Naive thymus-derived CD4-positive, alpha-beta T cell (primary cell): ENCODE measurements at regions of chr7 and their contacts with region 1.

Region 1: GRCh38 chr7:141014524-141015395 is at the start of gene MRPS33:
- DNase-seq: peak; percentile 79 to 97 (median 96)
- ATAC-seq: peak; percentile 99
- H3K4me3 ChIP-seq: peak within 1 kb of the TSS; percentile 82
- H3K4me3 Mint-ChIP-seq: peak within 1 kb of the TSS; percentile 85 to 99 (median 98)
- H3K27ac ChIP-seq: peak within 1 kb of the TSS; percentile 95
- H3K27ac Mint-ChIP-seq: peak within 1 kb of the TSS; percentile 97 to 100 (median 100)
- H3K4me1 ChIP-seq: peaks cover 8 to 16% of the 10 kb centered on the region in 2 donors
- H3K4me1 Mint-ChIP-seq: peaks cover 10 to 49% (median 39%) of the 10 kb centered on the region in 7 donors
- H3K27me3 ChIP-seq: no peaks in the 10 kb centered on the region
- H3K27me3 Mint-ChIP-seq: peaks cover 5 to 29% (median 8%) of the 10 kb centered on the region in 5 donors
- total RNA-seq, gene MRPS33: 25.9 to 69.1 (median 48.4) TPM

Region 2: DNA sequence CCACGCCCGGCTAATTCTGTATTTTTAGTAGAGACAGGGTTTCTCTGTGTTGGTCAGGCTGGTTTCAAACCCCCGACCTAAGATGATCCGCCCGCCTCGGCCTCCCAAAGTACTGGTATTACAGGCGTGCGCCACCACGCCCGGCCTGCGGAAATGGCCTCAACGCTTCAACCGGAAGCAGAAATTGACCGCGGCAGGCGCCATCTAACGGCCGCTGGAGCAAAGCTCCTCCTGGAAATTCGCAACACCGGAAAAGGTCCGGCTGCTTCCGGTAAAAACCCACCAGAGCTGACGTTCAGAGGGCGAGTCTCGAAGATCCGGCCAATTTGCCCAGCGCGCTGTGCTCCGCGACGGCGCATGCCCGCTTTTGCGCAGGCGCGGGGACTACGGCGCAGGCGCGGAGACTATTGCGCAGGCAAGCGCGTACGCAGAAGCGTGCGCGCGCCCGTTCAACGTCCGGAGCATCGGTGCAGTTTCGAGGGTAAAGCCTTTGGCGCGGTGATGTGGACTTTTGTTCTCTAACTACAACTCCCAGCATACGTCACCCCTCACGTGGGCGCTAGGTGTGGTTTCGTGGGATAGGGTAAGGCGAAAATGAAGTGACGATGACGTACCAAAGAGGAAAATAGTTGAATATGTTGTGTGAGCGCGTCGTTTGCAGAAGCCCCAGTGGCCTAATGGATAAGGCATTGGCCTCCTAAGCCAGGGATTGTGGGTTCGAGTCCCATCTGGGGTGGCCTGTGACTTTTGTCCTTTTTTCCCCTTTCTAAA is 1674.5 kb before region 1 on chr7:
- CTCF ChIA-PET with region 1: no interaction called
- POLR2A ChIA-PET with region 1: no interaction called
- intact Hi-C with region 1: loop called in 1 of 2 experiments (anchors 1 kb)
- DNase-seq: peak; percentile 93 to 100 (median 99)
- ATAC-seq: peak; percentile 89
- H3K4me3 ChIP-seq: peak overlapping the region; percentile 95
- H3K4me3 Mint-ChIP-seq: peak overlapping the region; percentile 93 to 100 (median 98)
- H3K27ac ChIP-seq: peak overlapping the region; percentile 100
- H3K27ac Mint-ChIP-seq: peak overlapping the region; percentile 98 to 100 (median 100)
- H3K4me1 ChIP-seq: peaks cover 11 to 13% of the 10 kb centered on the region in 2 donors
- H3K4me1 Mint-ChIP-seq: peaks cover 12 to 49% (median 38%) of the 10 kb centered on the region in 7 donors
- H3K27me3 ChIP-seq: no peaks in the 10 kb centered on the region
- H3K27me3 Mint-ChIP-seq: peaks cover 0 to 9% (median 5%) of the 10 kb centered on the region in 5 donors

Region 3: DNA sequence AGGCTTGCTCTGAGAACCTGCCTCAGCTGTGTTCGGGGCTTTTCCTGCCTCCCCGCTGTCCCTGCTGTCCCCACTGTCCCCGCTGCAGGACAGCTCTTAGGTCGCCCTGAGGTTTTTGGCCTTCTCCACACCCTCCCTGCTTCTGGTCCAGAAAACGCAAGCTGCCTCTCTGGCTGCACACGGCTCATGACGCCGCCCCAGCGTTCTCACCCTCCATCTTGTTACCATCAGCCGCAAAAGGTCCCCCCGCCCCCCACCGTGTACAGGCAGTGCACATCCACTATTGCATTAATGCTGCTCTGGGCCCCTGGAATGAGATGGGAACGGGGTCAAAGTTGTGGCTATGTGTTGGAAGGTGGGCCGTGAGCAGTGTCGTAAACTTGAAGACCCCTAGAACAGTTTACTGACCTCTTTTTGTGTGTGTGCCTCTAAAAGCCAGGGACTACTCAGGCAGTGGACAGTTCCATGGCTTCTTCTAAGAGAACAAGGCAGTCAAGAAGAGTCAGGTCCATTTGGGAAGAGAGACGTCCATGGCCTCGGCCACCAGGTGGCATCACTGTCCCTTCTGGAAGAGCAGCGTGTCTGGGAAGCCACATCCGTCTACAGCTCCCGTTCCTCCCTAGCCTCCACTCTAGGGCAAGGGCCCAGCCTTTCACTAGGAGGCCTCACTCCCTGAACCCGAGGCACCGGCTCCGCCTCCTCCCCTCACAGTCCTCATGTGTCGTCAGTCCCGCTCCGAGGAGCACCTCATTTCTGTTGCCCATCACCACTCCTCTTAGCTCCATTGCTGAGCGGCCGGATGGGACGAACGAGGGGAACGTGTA is 497.0 kb before region 1 on chr7:
- CTCF ChIA-PET with region 1: no interaction called
- POLR2A ChIA-PET with region 1: interaction called, 5 read pairs
- intact Hi-C with region 1: loop called in 1 of 2 experiments (anchors 1 kb)
- DNase-seq: peak; percentile 36 to 69 (median 45)
- ATAC-seq: peak; percentile 74
- H3K4me3 ChIP-seq: no peak overlapping the region
- H3K4me3 Mint-ChIP-seq: peak overlapping the region in 4 of 10 donors; percentile 23 to 65 (median 41)
- H3K27ac ChIP-seq: no peak overlapping the region
- H3K27ac Mint-ChIP-seq: peak overlapping the region in 1 of 9 donors; percentile 65
- H3K4me1 ChIP-seq: no peaks in the 10 kb centered on the region
- H3K4me1 Mint-ChIP-seq: peaks cover 0 to 7% (median 3%) of the 10 kb centered on the region in 7 donors
- H3K27me3 ChIP-seq: peaks cover 0 to 2% of the 10 kb centered on the region in 2 donors
- H3K27me3 Mint-ChIP-seq: peaks cover 0 to 11% (median 6%) of the 10 kb centered on the region in 5 donors

Region 4: GRCh38 chr7:140696680-140697446 is 317.9 kb before region 1 on chr7 and contains the start of gene NDUFB2:
- CTCF ChIA-PET with region 1: interaction called, 4 read pairs
- POLR2A ChIA-PET with region 1: interaction called, 7 read pairs
- intact Hi-C with region 1: loop called (anchors 1 kb)
- DNase-seq: peak; percentile 72 to 92 (median 90)
- ATAC-seq: peak; percentile 92
- H3K4me3 ChIP-seq: peak within 1 kb of the TSS; percentile 99
- H3K4me3 Mint-ChIP-seq: peak within 1 kb of the TSS; percentile 87 to 100 (median 98)
- H3K27ac ChIP-seq: peak within 1 kb of the TSS; percentile 88
- H3K27ac Mint-ChIP-seq: peak within 1 kb of the TSS; percentile 92 to 99 (median 98)
- H3K4me1 ChIP-seq: peaks cover 12 to 16% of the 10 kb centered on the region in 2 donors
- H3K4me1 Mint-ChIP-seq: peaks cover 18 to 50% (median 40%) of the 10 kb centered on the region in 7 donors
- H3K27me3 ChIP-seq: no peaks in the 10 kb centered on the region
- H3K27me3 Mint-ChIP-seq: no peaks in the 10 kb centered on the region
- total RNA-seq, gene NDUFB2: 88.3 to 184 (median 94.0) TPM

Region 5: GRCh38 chr7:140924019-140924820 is 90.5 kb before region 1 on chr7:
- CTCF ChIA-PET with region 1: interaction called, 7 read pairs
- POLR2A ChIA-PET with region 1: interaction called, 15 read pairs
- intact Hi-C with region 1: loop called (anchors 1 kb)
- DNase-seq: peak; percentile 61 to 89 (median 70)
- ATAC-seq: peak; percentile 84
- H3K4me3 ChIP-seq: peak overlapping the region; percentile 85
- H3K4me3 Mint-ChIP-seq: peak overlapping the region in 1 of 10 donors; percentile 89
- H3K27ac ChIP-seq: peak overlapping the region; percentile 100
- H3K27ac Mint-ChIP-seq: peak overlapping the region in 3 of 9 donors; percentile 92 to 99 (median 94)
- H3K4me1 ChIP-seq: peaks cover 9 to 18% of the 10 kb centered on the region in 2 donors
- H3K4me1 Mint-ChIP-seq: peaks cover 10 to 44% (median 22%) of the 10 kb centered on the region in 7 donors
- H3K27me3 ChIP-seq: no peaks in the 10 kb centered on the region
- H3K27me3 Mint-ChIP-seq: peaks cover 0 to 5% (median 0%) of the 10 kb centered on the region in 5 donors

Region 6: DNA sequence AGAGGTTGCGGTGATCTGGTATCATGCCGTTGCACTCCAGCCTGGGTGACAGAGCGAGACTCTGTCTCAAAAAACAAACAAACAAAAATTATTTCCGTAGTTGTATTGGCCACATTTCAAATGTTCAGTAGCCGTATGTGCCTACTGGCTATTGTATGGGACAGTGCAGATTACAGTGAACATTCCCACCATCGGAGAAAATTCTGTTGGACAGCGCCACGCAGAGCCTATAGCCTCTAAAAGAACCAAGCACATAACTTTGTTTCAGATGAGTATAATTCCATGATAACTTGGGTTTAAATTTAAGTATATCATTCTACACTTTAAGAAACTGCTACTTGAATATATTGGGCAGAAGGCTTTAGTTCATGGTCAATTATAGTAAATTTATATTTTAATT is 64.5 kb after region 1 on chr7:
- CTCF ChIA-PET with region 1: no interaction called
- POLR2A ChIA-PET with region 1: no interaction called
- intact Hi-C with region 1: no loop called
- DNase-seq: no peak
- ATAC-seq: no peak
- H3K4me3 ChIP-seq: no peak overlapping the region
- H3K4me3 Mint-ChIP-seq: no peak overlapping the region
- H3K27ac ChIP-seq: no peak overlapping the region
- H3K27ac Mint-ChIP-seq: no peak overlapping the region
- H3K4me1 ChIP-seq: no peaks in the 10 kb centered on the region
- H3K4me1 Mint-ChIP-seq: peaks cover 0 to 10% (median 3%) of the 10 kb centered on the region in 7 donors
- H3K27me3 ChIP-seq: peaks cover 4 to 21% of the 10 kb centered on the region in 2 donors
- H3K27me3 Mint-ChIP-seq: peaks cover 8 to 27% (median 13%) of the 10 kb centered on the region in 5 donors

Region 7: GRCh38 chr7:141533149-141533949 is 518.6 kb after region 1 on chr7:
- CTCF ChIA-PET with region 1: no interaction called
- POLR2A ChIA-PET with region 1: no interaction called
- intact Hi-C with region 1: loop called (anchors 1 kb)
- DNase-seq: peak; percentile 10 to 60 (median 46)
- ATAC-seq: peak; percentile 83
- H3K4me3 ChIP-seq: no peak overlapping the region
- H3K4me3 Mint-ChIP-seq: no peak overlapping the region
- H3K27ac ChIP-seq: no peak overlapping the region
- H3K27ac Mint-ChIP-seq: peak overlapping the region in 1 of 9 donors; percentile 70
- H3K4me1 ChIP-seq: no peaks in the 10 kb centered on the region
- H3K4me1 Mint-ChIP-seq: peaks cover 0 to 4% (median 0%) of the 10 kb centered on the region in 7 donors
- H3K27me3 ChIP-seq: peaks cover 0 to 5% of the 10 kb centered on the region in 2 donors
- H3K27me3 Mint-ChIP-seq: peaks cover 32 to 40% (median 34%) of the 10 kb centered on the region in 5 donors

Region 8: GRCh38 chr7:141654551-141654950 is 639.8 kb after region 1 on chr7:
- CTCF ChIA-PET with region 1: no interaction called
- POLR2A ChIA-PET with region 1: no interaction called
- intact Hi-C with region 1: loop called (anchors 5 kb)
- DNase-seq: peak in 8 of 9 donors; percentile 44 to 79 (median 71)
- ATAC-seq: peak; percentile 96
- H3K4me3 ChIP-seq: no peak overlapping the region
- H3K4me3 Mint-ChIP-seq: no peak overlapping the region
- H3K27ac ChIP-seq: no peak overlapping the region
- H3K27ac Mint-ChIP-seq: peak overlapping the region; percentile 5 to 81 (median 41)
- H3K4me1 ChIP-seq: no peaks in the 10 kb centered on the region
- H3K4me1 Mint-ChIP-seq: peaks cover 5 to 11% (median 11%) of the 10 kb centered on the region in 7 donors
- H3K27me3 ChIP-seq: no peaks in the 10 kb centered on the region
- H3K27me3 Mint-ChIP-seq: no peaks in the 10 kb centered on the region